A673 (cell line): ENCODE measurements at regions of chr2 and their contacts with region 1.

Region 1: GRCh38 chr2:159506202-159506601 is 110.1 kb downstream of the BAZ2B start:
- DNase-seq: no peak
- H3K4me3 ChIP-seq: no peak overlapping the region
- H3K27ac ChIP-seq: no peak overlapping the region
- H3K4me1 ChIP-seq: no peaks in the 10 kb centered on the region
- H3K27me3 ChIP-seq: no peaks in the 10 kb centered on the region
- CTCF ChIP-seq: no peak

Region 2: DNA sequence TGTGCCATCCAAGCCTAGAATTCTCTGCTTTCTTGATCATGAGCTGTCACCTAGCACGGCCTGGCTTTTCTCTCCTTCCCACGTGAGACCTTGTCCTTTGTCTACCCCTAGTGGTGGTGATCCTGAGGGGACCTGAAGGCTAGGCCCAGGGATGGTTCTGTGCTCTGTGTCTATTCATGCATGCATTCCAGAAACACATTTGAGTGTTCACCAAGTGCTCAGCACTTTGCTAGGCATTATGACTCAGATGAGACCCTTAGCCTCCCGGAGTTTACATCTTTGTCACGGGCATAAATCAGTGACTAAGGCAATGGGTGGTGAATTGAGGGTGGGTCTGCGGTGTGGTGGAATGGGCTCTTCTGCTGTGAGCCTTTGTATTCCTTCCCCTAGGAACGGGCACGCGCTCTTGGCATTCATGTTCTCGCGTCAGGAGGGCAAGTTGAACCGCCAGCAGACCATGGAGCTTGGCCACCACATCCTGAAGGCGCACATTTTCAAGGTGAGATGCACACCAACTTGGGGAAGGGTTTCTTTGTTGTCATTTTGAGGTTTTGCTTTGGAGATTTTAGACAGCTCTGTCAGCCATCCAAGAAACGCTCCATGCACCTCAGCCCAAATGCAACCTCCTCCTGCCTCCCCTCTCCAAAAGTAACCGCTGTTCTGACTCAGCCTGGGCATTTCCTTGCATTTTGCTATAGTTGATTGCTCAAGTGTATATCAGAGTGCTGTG is 320.6 kb before region 1 on chr2:
- CTCF ChIA-PET with region 1: no interaction called
- POLR2A ChIA-PET with region 1: no interaction called
- intact Hi-C with region 1: no loop called
- DNase-seq: peak; percentile 58
- H3K4me3 ChIP-seq: no peak overlapping the region
- H3K27ac ChIP-seq: no peak overlapping the region
- H3K4me1 ChIP-seq: no peaks in the 10 kb centered on the region
- H3K27me3 ChIP-seq: no peaks in the 10 kb centered on the region
- CTCF ChIP-seq: peak; percentile 52

Region 3: GRCh38 chr2:159518321-159519005 is 12.3 kb after region 1 on chr2:
- CTCF ChIA-PET with region 1: no interaction called
- POLR2A ChIA-PET with region 1: interaction called, 11 read pairs
- intact Hi-C with region 1: no loop called
- DNase-seq: no peak
- H3K4me3 ChIP-seq: no peak overlapping the region
- H3K27ac ChIP-seq: no peak overlapping the region
- H3K4me1 ChIP-seq: peaks cover 13% of the 10 kb centered on the region
- H3K27me3 ChIP-seq: no peaks in the 10 kb centered on the region
- CTCF ChIP-seq: no peak